Spleen (tissue), 13 donors: ENCODE measurements at regions of chr19 and their contacts with region 1.

Region 1: GRCh38 chr19:46728693-46729676 is 12.1 kb upstream of the PRKD2 start:
- DNase-seq: peak; percentile 97
- H3K4me3 ChIP-seq: peak overlapping the region in 2 of 8 donors; percentile 33 to 57
- H3K27ac ChIP-seq: peak overlapping the region in 7 of 8 donors; percentile 48 to 93 (median 73)
- H3K4me1 ChIP-seq: peaks cover 38 to 100% (median 84%) of the 10 kb centered on the region in 6 donors
- H3K27me3 ChIP-seq: no peaks in the 10 kb centered on the region
- CTCF ChIP-seq: peak; percentile 92 to 99 (median 98)
- POLR2A ChIP-seq: no peak

Region 2: DNA sequence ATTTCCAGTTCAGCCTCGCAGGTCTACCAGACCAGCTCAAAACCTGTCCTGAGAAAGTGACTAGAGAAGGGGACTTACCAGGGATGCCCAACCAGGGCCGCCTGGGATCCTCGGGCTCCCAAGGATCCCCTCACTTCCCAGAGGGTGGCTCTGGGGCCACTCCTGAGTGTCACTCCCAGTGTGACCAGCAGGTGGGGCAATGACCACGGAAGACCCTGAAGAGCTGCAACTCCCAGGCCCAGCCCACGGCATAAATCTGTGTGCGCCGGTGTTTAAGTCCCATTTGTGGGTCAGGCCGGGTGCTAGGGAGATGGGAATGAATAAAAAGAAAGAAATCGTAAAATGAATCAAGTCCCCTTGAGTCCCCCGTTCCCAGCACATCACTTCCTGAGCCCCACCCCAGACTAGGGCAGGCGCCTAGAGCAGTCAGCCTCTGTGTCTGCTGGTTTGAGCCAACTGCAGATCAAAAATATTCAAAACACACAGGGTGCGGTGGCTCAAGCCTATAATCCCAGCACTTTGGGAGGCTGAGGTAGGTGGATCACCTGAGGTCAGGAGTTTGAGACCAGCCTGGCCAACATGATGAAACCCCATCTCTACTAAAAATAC is 114.8 kb before region 1 on chr19:
- intact Hi-C with region 1: no loop called
- DNase-seq: peak; percentile 93
- H3K4me3 ChIP-seq: no peak overlapping the region
- H3K27ac ChIP-seq: no peak overlapping the region
- H3K4me1 ChIP-seq: peaks cover 36 to 95% (median 59%) of the 10 kb centered on the region in 6 donors
- H3K27me3 ChIP-seq: no peaks in the 10 kb centered on the region
- CTCF ChIP-seq: peak; percentile 83 to 96 (median 92)
- POLR2A ChIP-seq: no peak

Region 3: GRCh38 chr19:46704379-46705076 is 24.5 kb before region 1 on chr19:
- intact Hi-C with region 1: loop called (anchors 2 kb)
- DNase-seq: peak; percentile 95
- H3K4me3 ChIP-seq: no peak overlapping the region
- H3K27ac ChIP-seq: peak overlapping the region in 2 of 8 donors; percentile 9 to 30
- H3K4me1 ChIP-seq: peaks cover 0 to 29% (median 11%) of the 10 kb centered on the region in 6 donors
- H3K27me3 ChIP-seq: no peaks in the 10 kb centered on the region
- CTCF ChIP-seq: peak; percentile 89 to 99 (median 96)
- POLR2A ChIP-seq: no peak